Prostate gland (tissue), 2 donors: ENCODE measurements at regions of chrX and their contacts with region 1.

Region 1: DNA sequence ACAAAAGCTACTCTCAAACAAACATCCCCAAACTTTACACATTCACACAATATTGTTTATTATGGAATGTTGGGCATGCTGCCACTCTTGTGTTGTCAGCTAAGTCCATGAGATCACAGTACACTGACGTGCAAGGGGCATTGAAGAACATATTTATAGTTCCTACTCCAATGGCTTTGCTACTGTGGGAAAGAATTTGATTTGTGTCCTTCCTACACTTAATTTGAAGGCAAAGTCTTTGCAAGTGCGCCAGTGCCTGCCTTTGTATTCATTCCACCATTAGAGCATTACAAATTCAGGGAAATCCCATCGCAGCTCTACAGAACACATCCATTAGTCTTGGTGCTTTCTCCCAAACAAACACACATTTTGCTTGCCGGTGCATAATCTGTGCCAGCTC is 45.4 kb upstream of the FTHL17 start:
- DNase-seq: no peak
- H3K4me3 ChIP-seq: no peak overlapping the region
- H3K27ac ChIP-seq: no peak overlapping the region
- H3K4me1 ChIP-seq: no peaks in the 10 kb centered on the region
- H3K27me3 ChIP-seq: no peaks in the 10 kb centered on the region
- CTCF ChIP-seq: no peak
- POLR2A ChIP-seq: no peak

Region 2: GRCh38 chrX:30577362-30577991 is 539.8 kb before region 1 on chrX and contains the start of gene TASL:
- intact Hi-C with region 1: no loop called
- DNase-seq: no peak
- H3K4me3 ChIP-seq: no peak within 1 kb of the TSS
- H3K27ac ChIP-seq: no peak within 1 kb of the TSS
- H3K4me1 ChIP-seq: no peaks in the 10 kb centered on the region
- H3K27me3 ChIP-seq: no peaks in the 10 kb centered on the region
- CTCF ChIP-seq: no peak
- POLR2A ChIP-seq: no peak
- total RNA-seq, gene TASL: 0.18 TPM in 1 of 2 donors, not detected in the other

Region 3: DNA sequence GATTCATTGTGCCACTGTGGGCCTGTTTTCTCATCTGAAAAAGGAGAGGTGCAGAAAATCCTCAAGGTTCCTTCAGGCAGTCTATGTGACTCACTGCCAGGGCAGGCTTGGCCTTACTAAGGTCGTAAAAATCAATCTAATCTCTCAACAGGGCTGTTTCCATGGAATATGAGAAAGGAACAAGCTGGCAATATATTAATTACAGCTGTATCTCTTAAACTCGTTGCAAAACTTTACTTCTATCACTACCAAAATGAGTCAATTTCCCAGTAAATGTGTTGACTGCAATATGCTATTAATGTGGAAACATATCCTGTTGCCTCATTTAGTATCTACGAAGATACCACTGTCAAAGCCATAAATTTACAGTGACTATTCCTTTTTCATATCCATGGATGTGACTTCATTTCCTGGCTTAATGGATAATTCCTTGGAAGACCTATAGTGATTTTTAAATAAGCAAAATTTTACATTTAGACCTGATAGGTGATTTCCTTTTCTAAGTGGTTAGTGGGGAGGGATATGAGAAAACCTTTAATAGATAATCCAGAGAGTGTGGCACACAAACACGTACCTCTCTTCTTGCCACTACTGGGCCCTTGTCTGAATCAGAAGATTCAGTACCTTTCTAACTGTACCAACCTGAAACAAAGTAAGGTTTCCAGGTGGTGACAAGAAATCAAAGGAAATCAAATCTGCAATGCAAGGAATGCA is 81.9 kb after region 1 on chrX:
- intact Hi-C with region 1: loop called (anchors 5 kb)
- DNase-seq: no peak
- H3K4me3 ChIP-seq: no peak overlapping the region
- H3K27ac ChIP-seq: no peak overlapping the region
- H3K4me1 ChIP-seq: no peaks in the 10 kb centered on the region
- H3K27me3 ChIP-seq: no peaks in the 10 kb centered on the region
- CTCF ChIP-seq: no peak
- POLR2A ChIP-seq: no peak

Region 4: DNA sequence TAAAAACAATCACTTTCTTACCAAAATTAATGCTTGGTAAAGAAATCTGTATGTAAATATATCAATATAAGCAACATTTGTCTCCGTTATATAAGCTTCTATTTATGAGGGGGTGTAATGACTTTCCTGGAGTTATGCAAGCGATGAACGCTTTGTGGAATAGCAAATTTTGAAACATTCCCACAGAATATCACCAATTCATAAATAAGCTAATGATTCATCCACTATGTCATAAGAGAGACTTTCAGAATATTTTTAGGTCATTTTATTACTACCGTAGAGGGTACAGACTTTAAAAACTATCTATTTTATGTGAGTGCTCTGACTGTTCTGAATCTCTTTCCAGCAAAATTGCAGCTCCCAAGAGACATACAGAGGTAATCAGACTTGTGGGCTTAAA is 134.1 kb after region 1 on chrX:
- intact Hi-C with region 1: no loop called
- DNase-seq: no peak
- H3K4me3 ChIP-seq: no peak overlapping the region
- H3K27ac ChIP-seq: no peak overlapping the region
- H3K4me1 ChIP-seq: no peaks in the 10 kb centered on the region
- H3K27me3 ChIP-seq: no peaks in the 10 kb centered on the region
- CTCF ChIP-seq: no peak
- POLR2A ChIP-seq: no peak